ENCODE measurements at regions of chr15 and their contacts with region 1.

Region 1: GRCh38 chr15:90362936-90363212 is 10.8 kb downstream of the ZNF774 start:
- DNase-seq: peak in 1 of 3 donors; percentile 23
- H3K4me3 ChIP-seq: no peak overlapping the region
- H3K27ac ChIP-seq: no peak overlapping the region
- H3K4me1 ChIP-seq: peaks cover 0 to 27% (median 5%) of the 10 kb centered on the region in 4 experiments
- H3K27me3 ChIP-seq: peaks cover 0 to 10% (median 4%) of the 10 kb centered on the region in 5 experiments

Region 2: GRCh38 chr15:90376789-90377188 is 13.9 kb after region 1 on chr15:
- CTCF ChIA-PET with region 1: interaction called, 17 read pairs
- POLR2A ChIA-PET with region 1: no interaction called
- DNase-seq: peak; percentile 81 to 88 (median 87)
- H3K4me3 ChIP-seq: peak overlapping the region in 3 of 7 experiments; percentile 15 to 48 (median 24)
- H3K27ac ChIP-seq: no peak overlapping the region
- H3K4me1 ChIP-seq: peaks cover 17 to 21% (median 19%) of the 10 kb centered on the region in 4 experiments
- H3K27me3 ChIP-seq: peaks cover 0 to 53% (median 14%) of the 10 kb centered on the region in 5 experiments

Region 3: DNA sequence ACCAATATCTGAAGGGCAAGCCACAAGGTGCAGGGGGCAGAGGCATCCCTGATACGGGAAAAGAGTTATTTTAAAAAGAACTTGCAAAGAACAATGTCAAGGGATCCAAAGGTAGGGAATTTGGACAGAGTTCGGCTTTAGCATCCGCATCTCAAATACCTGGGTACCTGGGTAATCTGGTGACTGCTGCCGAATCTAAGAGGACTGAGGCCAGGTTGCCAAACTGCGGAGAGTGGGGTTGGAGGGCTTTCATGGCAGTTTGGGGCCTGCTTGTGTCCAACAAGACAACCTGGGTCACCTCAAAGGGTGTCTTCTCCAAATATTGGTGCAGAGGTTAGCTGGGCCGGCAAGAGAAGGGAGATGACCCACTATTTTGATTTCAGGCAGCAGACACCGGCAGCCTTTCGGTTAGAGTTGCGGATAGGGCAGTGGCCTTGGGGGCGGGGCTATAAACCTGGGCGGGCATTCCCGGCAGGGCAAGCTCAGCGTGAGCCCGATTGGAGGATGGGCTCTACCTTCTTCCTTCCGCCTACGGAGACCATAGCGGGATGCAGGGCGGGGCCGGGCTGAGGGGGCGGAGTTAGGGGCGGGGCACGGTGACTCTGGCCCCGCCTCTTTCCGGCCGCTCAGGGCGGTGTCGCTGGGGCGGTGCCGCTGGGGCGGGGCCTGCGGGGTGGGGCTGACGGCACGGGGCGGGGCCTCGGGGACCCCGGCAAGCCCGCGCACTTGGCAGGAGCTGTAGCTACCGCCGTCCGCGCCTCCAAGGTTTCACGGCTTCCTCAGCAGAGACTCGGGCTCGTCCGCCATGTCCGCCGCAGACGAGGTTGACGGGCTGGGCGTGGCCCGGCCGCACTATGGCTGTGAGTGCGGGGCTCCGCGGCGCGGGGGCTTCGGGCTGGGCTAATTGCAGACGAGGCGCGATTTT is 24.9 kb after region 1 on chr15 and contains the start of gene IQGAP1:
- CTCF ChIA-PET with region 1: interaction called, 11 read pairs
- POLR2A ChIA-PET with region 1: no interaction called
- DNase-seq: peak; percentile 95 to 97 (median 97)
- H3K4me3 ChIP-seq: peak within 1 kb of the TSS; percentile 73 to 96 (median 84)
- H3K27ac ChIP-seq: peak within 1 kb of the TSS; percentile 66 to 90
- H3K4me1 ChIP-seq: peaks cover 0 to 17% (median 12%) of the 10 kb centered on the region in 4 experiments
- H3K27me3 ChIP-seq: peaks cover 0 to 3% (median 0%) of the 10 kb centered on the region in 5 experiments

Region 4: DNA sequence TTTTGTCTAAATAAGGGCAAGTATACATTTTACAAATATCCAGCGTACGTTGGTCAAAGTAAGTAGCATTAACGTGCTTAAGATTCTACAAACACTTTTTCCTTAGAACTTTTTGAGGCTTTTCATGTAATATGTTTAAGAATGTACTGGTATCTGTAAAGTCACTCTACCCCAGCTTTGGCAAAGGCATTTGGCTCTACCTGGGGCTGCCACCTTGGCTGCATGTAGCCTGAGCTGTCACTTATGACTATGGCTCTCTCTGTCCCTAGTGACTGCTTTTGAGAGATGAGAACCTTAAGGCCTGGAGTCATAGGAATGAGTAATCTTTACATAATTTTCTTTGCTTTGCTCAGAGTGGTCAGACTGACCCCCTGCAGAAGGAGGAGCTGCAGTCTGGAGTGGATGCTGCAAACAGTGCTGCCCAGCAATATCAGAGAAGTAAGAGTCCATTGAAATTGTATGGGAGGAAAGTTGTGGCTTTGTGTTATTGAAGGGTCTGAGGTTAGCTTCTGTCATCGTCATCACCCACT is 86.4 kb after region 1 on chr15:
- CTCF ChIA-PET with region 1: interaction called, 10 read pairs
- POLR2A ChIA-PET with region 1: no interaction called
- DNase-seq: no peak
- H3K4me3 ChIP-seq: no peak overlapping the region
- H3K27ac ChIP-seq: no peak overlapping the region
- H3K4me1 ChIP-seq: no peaks in the 10 kb centered on the region
- H3K27me3 ChIP-seq: no peaks in the 10 kb centered on the region